Tibial artery (tissue), 4 donors: ENCODE measurements at regions of chr7 and their contacts with region 1.

Region 1: GRCh38 chr7:43729214-43729923 is at the start of gene COA1:
- DNase-seq: peak; percentile 82 to 90
- H3K4me3 ChIP-seq: peak within 1 kb of the TSS; percentile 68 to 71
- H3K27ac ChIP-seq: peak within 1 kb of the TSS; percentile 72 to 78
- H3K4me1 ChIP-seq: peaks cover 0 to 20% (median 7%) of the 10 kb centered on the region in 4 donors
- H3K27me3 ChIP-seq: no peaks in the 10 kb centered on the region
- CTCF ChIP-seq: no peak

Region 2: DNA sequence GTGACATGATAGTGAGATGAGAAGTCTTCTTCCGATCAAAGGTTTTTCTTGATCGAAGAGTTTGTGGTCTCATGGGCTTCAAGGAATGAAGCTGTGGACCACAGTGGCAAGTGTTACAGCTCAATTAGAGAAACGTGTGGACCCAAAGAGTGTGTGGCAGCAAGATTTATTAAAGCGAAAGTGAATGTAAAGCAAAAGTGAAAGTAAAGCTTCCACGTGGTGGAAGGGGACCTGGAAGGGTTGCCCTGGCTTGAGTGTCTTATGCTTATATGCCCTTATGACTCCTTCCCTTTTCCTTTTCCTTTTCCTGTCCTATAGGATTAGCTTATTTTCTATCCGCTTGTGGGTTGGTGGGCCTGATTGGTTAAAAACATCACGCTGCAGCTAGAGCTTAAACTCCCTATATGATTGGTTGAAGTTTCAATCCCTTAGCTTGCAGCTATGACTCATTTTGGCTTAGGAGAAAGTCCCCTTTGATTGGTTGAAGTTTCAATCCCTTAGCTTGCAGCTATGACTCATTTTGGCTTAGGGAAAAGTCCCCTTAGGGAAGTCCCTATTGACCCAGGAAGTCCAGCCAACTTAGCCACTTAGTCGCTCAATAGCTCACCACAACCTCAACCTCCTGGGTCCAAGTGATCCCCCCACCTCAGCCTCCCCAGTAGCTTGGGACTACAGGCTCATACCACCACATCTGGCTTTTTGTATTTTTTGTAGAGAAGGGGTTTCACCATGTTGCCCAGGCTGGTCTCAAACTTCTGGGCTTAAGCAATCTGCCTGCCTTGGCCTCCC is 105.3 kb after region 1 on chr7:
- intact Hi-C with region 1: loop called (anchors 5 kb)
- DNase-seq: no peak
- H3K4me3 ChIP-seq: peak overlapping the region in 1 of 2 donors; percentile 20
- H3K27ac ChIP-seq: no peak overlapping the region
- H3K4me1 ChIP-seq: peaks cover 0 to 8% (median 4%) of the 10 kb centered on the region in 4 donors
- H3K27me3 ChIP-seq: peaks cover 0 to 3% of the 10 kb centered on the region in 2 donors
- CTCF ChIP-seq: no peak